Heart left ventricle (tissue), 16 donors: ENCODE measurements at regions of chr9 and their contacts with region 1.

Region 1: DNA sequence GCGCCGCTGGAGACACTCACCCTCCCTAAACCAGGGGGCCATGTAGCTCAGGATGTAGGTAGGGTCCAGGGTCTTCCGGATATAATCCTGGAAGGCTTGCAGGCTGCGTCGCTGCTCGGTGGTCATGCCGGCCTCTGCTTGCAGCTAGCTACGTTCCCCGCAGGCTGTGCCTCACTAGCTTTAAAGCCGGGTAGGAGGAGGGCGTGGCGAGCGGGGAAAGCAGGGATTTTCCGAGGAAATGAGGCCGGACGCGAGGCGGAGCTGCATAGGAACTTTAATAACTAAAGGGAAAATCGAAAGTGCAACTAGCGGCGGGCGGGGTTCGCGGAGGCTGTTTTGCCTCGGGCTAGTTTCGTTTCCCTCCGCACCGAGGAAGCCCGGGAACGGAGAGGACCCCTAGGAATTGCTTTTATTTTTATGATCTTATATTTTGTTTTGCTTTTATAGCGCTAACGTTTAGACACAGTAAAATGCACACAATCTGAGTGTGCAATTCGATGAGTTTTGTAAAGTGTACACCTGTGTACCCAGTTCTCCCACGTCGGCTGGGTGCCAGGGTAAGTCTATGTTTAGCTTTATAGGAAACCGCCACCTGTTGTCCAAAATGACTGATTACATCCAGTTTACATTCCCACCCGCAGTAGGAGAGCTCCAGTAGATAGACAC is at the start of gene RIGI:
- DNase-seq: peak; percentile 93 to 95 (median 93)
- ATAC-seq: peak; percentile 86 to 97 (median 95)
- H3K4me3 ChIP-seq: peak within 1 kb of the TSS; percentile 55 to 80 (median 72)
- H3K27ac ChIP-seq: peak within 1 kb of the TSS; percentile 43 to 95 (median 84)
- H3K4me1 ChIP-seq: peaks cover 4 to 51% (median 24%) of the 10 kb centered on the region in 12 donors
- H3K27me3 ChIP-seq: no peaks in the 10 kb centered on the region
- CTCF ChIP-seq: peak; percentile 19 to 65 (median 51)
- POLR2A ChIP-seq: peak in 1 of 2 donors; percentile 81
- total RNA-seq, gene RIGI: 2.0 to 18.5 (median 4.4) TPM

Region 2: GRCh38 chr9:32378993-32379729 is 147.0 kb before region 1 on chr9:
- intact Hi-C with region 1: loop called in 5 of 10 experiments (anchors 2 to 10 kb)
- DNase-seq: peak in 2 of 5 donors; percentile 22 to 40
- ATAC-seq: peak; percentile 65 to 89 (median 86)
- H3K4me3 ChIP-seq: no peak overlapping the region
- H3K27ac ChIP-seq: no peak overlapping the region
- H3K4me1 ChIP-seq: peaks cover 0 to 18% (median 2%) of the 10 kb centered on the region in 12 donors
- H3K27me3 ChIP-seq: peaks cover 0 to 4% (median 0%) of the 10 kb centered on the region in 9 donors
- CTCF ChIP-seq: peak; percentile 62 to 87 (median 77)
- POLR2A ChIP-seq: no peak

Region 3: DNA sequence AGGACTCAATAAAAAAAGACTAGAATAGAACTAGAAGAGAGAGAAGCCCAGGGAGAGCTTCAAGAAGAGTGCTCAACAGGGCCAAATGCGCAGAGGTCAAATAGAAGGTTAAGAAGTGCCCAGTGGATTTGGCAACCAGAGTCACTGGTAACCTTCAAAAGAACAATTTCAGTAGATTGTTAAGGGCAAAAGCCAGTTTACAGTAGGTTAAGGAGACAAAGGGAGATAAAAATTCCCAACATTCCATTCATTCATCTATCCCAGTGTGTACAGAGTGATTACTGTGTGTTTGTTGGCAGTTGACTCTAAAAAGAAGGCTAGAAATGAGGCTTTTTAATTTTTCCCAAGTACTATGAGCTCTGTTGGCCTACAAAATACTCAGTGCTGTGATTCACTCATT is 69.6 kb before region 1 on chr9:
- intact Hi-C with region 1: loop called in 1 of 10 experiments (anchors 10 kb)
- DNase-seq: no peak
- ATAC-seq: no peak
- H3K4me3 ChIP-seq: no peak overlapping the region
- H3K27ac ChIP-seq: no peak overlapping the region
- H3K4me1 ChIP-seq: peaks cover 0 to 12% (median 0%) of the 10 kb centered on the region in 12 donors
- H3K27me3 ChIP-seq: no peaks in the 10 kb centered on the region
- CTCF ChIP-seq: no peak
- POLR2A ChIP-seq: no peak

Region 4: GRCh38 chr9:32550562-32551433 is 24.6 kb after region 1 on chr9:
- intact Hi-C with region 1: loop called in 3 of 10 experiments (anchors 1 to 2 kb)
- DNase-seq: peak; percentile 93 to 97 (median 95)
- ATAC-seq: peak; percentile 80 to 89 (median 88)
- H3K4me3 ChIP-seq: peak overlapping the region; percentile 54 to 87 (median 76)
- H3K27ac ChIP-seq: peak overlapping the region; percentile 64 to 99 (median 96)
- H3K4me1 ChIP-seq: peaks cover 0 to 39% (median 18%) of the 10 kb centered on the region in 12 donors
- H3K27me3 ChIP-seq: no peaks in the 10 kb centered on the region
- CTCF ChIP-seq: peak in 2 of 12 donors; percentile 13 to 40
- POLR2A ChIP-seq: peak in 1 of 2 donors; percentile 40

Region 5: DNA sequence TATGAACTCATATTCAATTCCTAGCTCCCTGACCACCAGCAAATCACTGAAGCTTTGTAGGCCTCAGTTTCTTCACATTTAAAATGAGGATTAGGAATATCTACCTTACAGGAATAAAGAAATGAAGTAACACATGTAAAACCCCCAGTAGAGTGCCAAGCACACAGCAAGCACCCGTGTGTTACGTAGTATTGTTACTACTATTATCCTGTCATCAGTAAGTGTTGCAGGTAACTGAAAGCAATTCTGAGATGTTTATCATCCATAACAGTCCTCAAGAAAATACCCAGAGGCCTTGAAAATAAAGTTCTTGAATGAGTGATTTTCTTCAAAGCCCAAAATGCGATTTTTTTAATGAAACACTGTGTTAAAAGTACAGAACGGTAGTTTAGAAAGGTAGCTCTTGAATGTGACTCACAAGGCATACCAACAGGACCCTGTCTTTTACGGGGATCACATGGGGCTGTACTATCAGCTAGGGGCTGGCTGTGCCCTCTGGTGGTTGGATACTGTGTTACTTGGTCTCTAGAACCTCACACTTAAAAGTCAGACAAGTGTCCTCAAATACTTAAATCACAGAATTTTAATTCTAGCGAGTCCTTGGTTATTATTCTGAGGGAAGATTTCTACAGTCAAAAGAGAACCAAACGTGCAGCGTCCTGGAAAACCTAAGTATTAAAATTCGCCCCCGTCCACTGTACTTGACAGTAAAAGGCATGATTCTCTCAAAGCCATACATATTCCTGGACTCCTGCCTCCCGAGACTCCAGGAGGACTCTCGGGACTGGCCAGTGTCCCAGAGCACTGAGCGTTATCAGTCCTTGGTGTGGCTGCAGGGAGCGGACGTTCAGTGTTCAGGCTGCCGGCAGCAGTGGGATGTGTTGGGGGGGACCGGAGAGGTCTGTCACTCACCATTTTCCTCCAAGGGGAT is 46.1 kb after region 1 on chr9:
- intact Hi-C with region 1: loop called in 3 of 10 experiments (anchors 1 to 10 kb)
- DNase-seq: peak in 4 of 5 donors; percentile 46 to 79 (median 58)
- ATAC-seq: peak; percentile 83 to 89 (median 86)
- H3K4me3 ChIP-seq: peak overlapping the region; percentile 71 to 96 (median 80)
- H3K27ac ChIP-seq: peak overlapping the region; percentile 79 to 98 (median 92)
- H3K4me1 ChIP-seq: peaks cover 0 to 35% (median 21%) of the 10 kb centered on the region in 12 donors
- H3K27me3 ChIP-seq: no peaks in the 10 kb centered on the region
- CTCF ChIP-seq: peak; percentile 13 to 66 (median 49)
- POLR2A ChIP-seq: no peak

Region 6: GRCh38 chr9:32755730-32756129 is 229.6 kb after region 1 on chr9:
- intact Hi-C with region 1: no loop called
- DNase-seq: no peak
- ATAC-seq: no peak
- H3K4me3 ChIP-seq: no peak overlapping the region
- H3K27ac ChIP-seq: no peak overlapping the region
- H3K4me1 ChIP-seq: no peaks in the 10 kb centered on the region
- H3K27me3 ChIP-seq: no peaks in the 10 kb centered on the region
- CTCF ChIP-seq: no peak
- POLR2A ChIP-seq: no peak

Region 7: DNA sequence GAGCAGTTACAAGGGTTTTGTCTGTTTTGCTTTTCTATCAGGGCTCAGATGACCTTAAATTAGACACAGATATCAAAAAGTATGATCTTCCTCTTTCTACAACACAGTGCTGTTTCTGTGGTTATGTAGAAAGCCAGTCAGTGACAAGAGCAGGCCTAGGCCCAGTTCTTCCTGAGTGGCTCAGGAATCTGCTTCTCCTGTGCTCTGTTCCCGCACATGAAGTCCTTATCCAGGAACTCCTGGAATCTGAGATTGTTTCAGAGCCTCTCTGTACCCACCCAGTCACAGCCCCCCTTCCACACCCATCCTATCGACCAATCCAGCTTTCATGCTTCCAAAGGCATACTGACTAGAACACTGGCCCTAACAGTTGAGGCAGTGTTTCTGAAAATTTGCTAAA is 590.7 kb after region 1 on chr9:
- intact Hi-C with region 1: no loop called
- DNase-seq: peak in 1 of 5 donors; percentile 20
- ATAC-seq: peak; percentile 39 to 92 (median 56)
- H3K4me3 ChIP-seq: no peak overlapping the region
- H3K27ac ChIP-seq: peak overlapping the region in 11 of 12 donors; percentile 45 to 85 (median 64)
- H3K4me1 ChIP-seq: peaks cover 0 to 50% (median 22%) of the 10 kb centered on the region in 12 donors
- H3K27me3 ChIP-seq: no peaks in the 10 kb centered on the region
- CTCF ChIP-seq: no peak
- POLR2A ChIP-seq: no peak